CD8-positive, alpha-beta T cell (primary cell): ENCODE measurements at regions of chr11 and their contacts with region 1.

Region 1: GRCh38 chr11:10933455-10934292 is 75.8 kb upstream of the ZBED5 start:
- DNase-seq: peak; percentile 66 to 87 (median 82)
- ATAC-seq: peak; percentile 88
- H3K4me3 ChIP-seq: peak overlapping the region; percentile 50 to 53
- H3K4me3 Mint-ChIP-seq: peak overlapping the region; percentile 83
- H3K27ac ChIP-seq: no peak overlapping the region
- H3K27ac Mint-ChIP-seq: no peak overlapping the region
- H3K4me1 ChIP-seq: no peaks in the 10 kb centered on the region
- H3K4me1 Mint-ChIP-seq: peaks cover 20% of the 10 kb centered on the region
- H3K27me3 ChIP-seq: peaks cover 7 to 19% of the 10 kb centered on the region in 2 experiments
- H3K27me3 Mint-ChIP-seq: peaks cover 18% of the 10 kb centered on the region
- CTCF ChIP-seq: peak; percentile 98

Region 2: GRCh38 chr11:10857709-10858438 is 75.8 kb before region 1 on chr11 and contains the start of gene ZBED5:
- CTCF ChIA-PET with region 1: interaction called, 3 read pairs
- POLR2A ChIA-PET with region 1: interaction called, 3 read pairs
- intact Hi-C with region 1: loop called in 1 of 2 experiments (anchors 5 kb)
- DNase-seq: peak; percentile 91 to 98 (median 94)
- ATAC-seq: peak; percentile 90
- H3K4me3 ChIP-seq: peak within 1 kb of the TSS; percentile 68 to 93
- H3K4me3 Mint-ChIP-seq: peak within 1 kb of the TSS; percentile 98
- H3K27ac ChIP-seq: peak within 1 kb of the TSS; percentile 91 to 92
- H3K27ac Mint-ChIP-seq: peak within 1 kb of the TSS; percentile 99
- H3K4me1 ChIP-seq: peaks cover 23% of the 10 kb centered on the region
- H3K4me1 Mint-ChIP-seq: peaks cover 51% of the 10 kb centered on the region
- H3K27me3 ChIP-seq: no peaks in the 10 kb centered on the region
- H3K27me3 Mint-ChIP-seq: no peaks in the 10 kb centered on the region
- CTCF ChIP-seq: no peak
- total RNA-seq, gene ZBED5: 57.5 to 59.2 TPM

Region 3: DNA sequence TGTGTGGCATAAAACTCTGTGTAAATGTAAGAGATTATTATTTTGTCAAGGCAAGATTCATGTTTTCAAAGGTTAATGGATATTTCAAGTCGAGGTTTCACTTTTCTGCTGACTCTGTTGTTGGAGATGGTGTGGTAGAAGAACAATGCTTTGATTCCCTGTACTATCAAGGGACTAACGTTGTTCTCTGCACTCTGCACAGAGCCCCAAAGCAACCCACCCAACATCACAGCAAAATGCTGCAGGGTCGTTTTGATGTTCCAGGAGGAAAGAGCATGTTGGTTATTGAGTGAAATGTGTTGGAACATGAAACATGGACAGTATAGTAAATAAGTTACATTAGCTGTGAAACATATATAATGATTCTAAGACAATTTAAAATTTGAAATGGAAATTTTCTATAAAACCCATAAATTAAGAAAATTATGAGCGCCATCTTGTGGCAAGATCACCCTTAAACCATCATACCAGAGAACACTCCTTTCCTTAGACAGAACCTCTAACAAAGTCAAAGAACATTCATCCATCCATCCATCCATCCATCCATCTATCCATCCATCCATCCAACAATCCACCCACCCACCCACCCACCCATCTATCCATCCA is 88.6 kb after region 1 on chr11:
- CTCF ChIA-PET with region 1: interaction called, 60 read pairs
- POLR2A ChIA-PET with region 1: no interaction called
- intact Hi-C with region 1: loop called (anchors 1 kb)
- DNase-seq: peak in 3 of 9 experiments; percentile 27 to 54 (median 48)
- ATAC-seq: no peak
- H3K4me3 ChIP-seq: no peak overlapping the region
- H3K4me3 Mint-ChIP-seq: no peak overlapping the region
- H3K27ac ChIP-seq: no peak overlapping the region
- H3K27ac Mint-ChIP-seq: no peak overlapping the region
- H3K4me1 ChIP-seq: no peaks in the 10 kb centered on the region
- H3K4me1 Mint-ChIP-seq: no peaks in the 10 kb centered on the region
- H3K27me3 ChIP-seq: no peaks in the 10 kb centered on the region
- H3K27me3 Mint-ChIP-seq: peaks cover 4% of the 10 kb centered on the region
- CTCF ChIP-seq: peak; percentile 63

Region 4: DNA sequence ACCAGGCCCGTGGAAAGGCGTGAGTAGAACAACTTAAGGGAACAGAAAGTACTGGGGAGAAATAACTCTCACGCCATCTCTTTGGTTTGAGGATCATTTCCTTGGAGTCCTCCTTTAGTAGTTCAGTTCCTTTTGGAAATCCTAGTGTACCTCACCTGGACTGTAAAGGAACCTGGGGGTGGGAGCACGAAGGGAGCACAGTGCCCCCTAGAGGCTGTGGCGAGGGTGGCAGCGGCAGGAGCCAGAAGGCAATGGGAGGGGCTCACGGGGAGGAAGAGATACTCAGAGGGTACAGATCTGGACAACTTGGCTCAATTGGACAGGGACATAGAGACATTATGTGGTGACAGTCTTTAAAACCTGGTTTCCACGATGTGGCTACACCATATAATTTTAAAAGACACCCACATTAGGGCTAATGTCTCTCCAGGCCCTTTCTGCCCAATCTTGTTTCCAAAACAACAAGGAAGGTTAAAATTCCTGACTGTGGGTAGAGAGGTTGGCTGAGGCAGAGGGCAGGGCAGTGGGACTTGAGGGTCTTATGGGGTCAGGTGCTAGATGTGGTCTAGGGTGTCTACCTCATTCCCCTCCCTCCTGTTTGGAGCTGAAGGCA is 332.4 kb after region 1 on chr11:
- CTCF ChIA-PET with region 1: interaction called, 3 read pairs
- POLR2A ChIA-PET with region 1: no interaction called
- intact Hi-C with region 1: loop called in 1 of 2 experiments (anchors 10 kb)
- DNase-seq: peak; percentile 24 to 63 (median 50)
- ATAC-seq: peak; percentile 63
- H3K4me3 ChIP-seq: no peak overlapping the region
- H3K4me3 Mint-ChIP-seq: no peak overlapping the region
- H3K27ac ChIP-seq: no peak overlapping the region
- H3K27ac Mint-ChIP-seq: no peak overlapping the region
- H3K4me1 ChIP-seq: no peaks in the 10 kb centered on the region
- H3K4me1 Mint-ChIP-seq: no peaks in the 10 kb centered on the region
- H3K27me3 ChIP-seq: no peaks in the 10 kb centered on the region
- H3K27me3 Mint-ChIP-seq: peaks cover 12% of the 10 kb centered on the region
- CTCF ChIP-seq: peak; percentile 45